ENCODE measurements at regions of chr20 and their contacts with region 1.

Region 1: DNA sequence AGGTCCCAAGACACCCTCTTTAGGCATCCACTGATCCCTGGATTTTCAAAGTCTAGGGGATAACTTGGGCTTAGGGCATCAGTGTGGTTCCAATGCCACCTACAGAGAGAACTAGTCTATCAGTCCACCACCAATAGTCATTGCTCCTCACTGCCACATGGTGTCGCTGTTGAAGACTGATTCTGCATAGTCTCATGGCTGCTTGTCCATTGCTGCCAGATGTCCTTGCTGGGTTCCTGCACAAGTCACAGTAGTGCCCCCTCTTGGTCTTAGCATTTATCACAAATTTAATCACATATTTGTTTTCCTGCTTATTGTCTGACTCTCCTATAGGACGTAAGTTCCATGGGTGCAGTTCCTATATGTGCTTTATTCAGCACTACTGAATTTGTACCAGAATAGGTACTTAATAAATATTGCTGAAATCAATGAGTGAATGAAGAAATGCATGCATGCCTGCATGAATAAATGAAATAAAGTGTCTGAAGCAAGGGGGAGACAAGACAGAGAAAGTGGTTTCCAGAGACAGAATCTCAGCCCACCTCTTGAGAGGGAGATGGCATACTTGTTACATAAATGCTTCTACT is 45.9 kb upstream of the RALY start:
- DNase-seq: peak in 1 of 3 donors; percentile 21
- ATAC-seq: peak; percentile 84
- H3K4me3 ChIP-seq: no peak overlapping the region
- H3K4me1 ChIP-seq: no peaks in the 10 kb centered on the region
- CTCF ChIP-seq: no peak

Region 2: DNA sequence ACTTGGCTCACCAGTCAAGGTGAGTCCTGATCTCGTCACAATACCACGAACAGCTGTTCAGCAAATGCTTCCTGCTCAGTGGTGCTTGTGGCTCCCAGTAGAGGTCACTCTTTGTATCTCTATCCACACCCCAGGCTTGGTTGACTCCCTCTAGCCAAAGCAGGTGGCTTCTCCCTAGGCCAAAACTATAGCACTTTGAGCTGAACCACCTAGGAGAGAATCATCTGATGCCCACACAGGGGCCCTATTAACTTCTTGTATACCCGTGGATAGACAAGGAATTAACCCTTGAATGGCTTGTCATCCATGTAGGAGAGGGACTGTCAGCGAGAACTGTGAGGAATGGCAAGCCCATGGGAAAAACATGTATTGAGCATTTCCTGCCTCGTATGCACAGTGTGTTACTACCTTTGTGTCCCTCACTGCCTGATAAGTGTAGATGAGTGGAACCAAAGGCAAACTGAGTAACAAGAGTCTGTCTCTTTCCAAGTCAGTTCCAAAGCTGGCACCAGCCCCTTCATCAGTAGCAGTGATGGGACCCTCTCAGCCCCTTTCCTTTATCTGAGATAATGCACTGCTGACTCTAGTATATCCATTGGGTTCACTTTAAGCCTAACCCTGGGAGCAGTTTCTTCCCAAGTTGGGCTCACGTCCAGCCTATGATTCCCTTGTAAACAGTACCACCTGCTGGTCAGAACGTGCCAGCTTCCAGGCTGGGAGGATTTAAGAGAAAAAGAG is 121.7 kb after region 1 on chr20:
- intact Hi-C with region 1: loop called in 1 of 2 experiments (anchors 10 kb)
- DNase-seq: peak in 2 of 3 donors; percentile 77 to 86
- ATAC-seq: peak; percentile 92
- H3K4me3 ChIP-seq: no peak overlapping the region
- H3K4me1 ChIP-seq: peaks cover 17% of the 10 kb centered on the region
- CTCF ChIP-seq: peak; percentile 72

Measured in mucosa of descending colon (tissue), 3 donors.